Activated CD8-positive, alpha-beta memory T cell treated with anti-CD3 and anti-CD28 coated beads, Interleukin-2, amount 10 ng/mL, durations not matched to agents 7 days and 5 days (primary cell): ENCODE measurements at regions of chr5 and their contacts with region 1.

Region 1: GRCh38 chr5:71475788-71476384 is 20.4 kb downstream of the BDP1 start:
- DNase-seq: no peak
- ATAC-seq: peak; percentile 76
- H3K4me3 Mint-ChIP-seq: no peak overlapping the region
- H3K27ac Mint-ChIP-seq: no peak overlapping the region
- H3K4me1 Mint-ChIP-seq: peaks cover 4% of the 10 kb centered on the region
- H3K27me3 Mint-ChIP-seq: no peaks in the 10 kb centered on the region

Region 2: DNA sequence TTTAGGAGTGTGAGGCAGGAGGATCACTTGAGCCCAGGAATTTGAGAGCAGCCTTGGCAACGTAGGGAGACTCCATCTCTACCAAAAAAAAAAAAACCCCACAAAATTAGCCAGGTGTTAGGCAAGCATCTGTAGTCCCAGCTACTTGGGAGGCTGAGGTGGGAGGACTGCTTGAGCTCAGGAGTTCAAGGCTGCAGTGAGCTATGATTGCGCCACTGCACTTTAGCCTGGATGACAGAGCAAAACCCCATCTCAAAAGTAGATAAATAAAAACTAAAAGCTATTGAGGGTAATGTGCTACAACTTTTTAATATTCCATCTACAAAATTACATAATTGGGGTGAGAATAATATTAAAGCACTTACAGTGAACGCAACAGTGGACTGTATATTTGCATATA is 14.5 kb before region 1 on chr5:
- CTCF ChIA-PET with region 1: interaction called, 11 read pairs
- DNase-seq: no peak
- ATAC-seq: no peak
- H3K4me3 Mint-ChIP-seq: no peak overlapping the region
- H3K27ac Mint-ChIP-seq: no peak overlapping the region
- H3K4me1 Mint-ChIP-seq: peaks cover 20% of the 10 kb centered on the region
- H3K27me3 Mint-ChIP-seq: no peaks in the 10 kb centered on the region

Region 3: GRCh38 chr5:71492817-71493615 is 17.1 kb after region 1 on chr5:
- CTCF ChIA-PET with region 1: interaction called, 17 read pairs
- DNase-seq: no peak
- ATAC-seq: no peak
- H3K4me3 Mint-ChIP-seq: no peak overlapping the region
- H3K27ac Mint-ChIP-seq: no peak overlapping the region
- H3K4me1 Mint-ChIP-seq: no peaks in the 10 kb centered on the region
- H3K27me3 Mint-ChIP-seq: no peaks in the 10 kb centered on the region

Region 4: GRCh38 chr5:71601222-71602041 is 125.5 kb after region 1 on chr5:
- CTCF ChIA-PET with region 1: interaction called, 13 read pairs
- DNase-seq: peak; percentile 93
- ATAC-seq: peak; percentile 92
- H3K4me3 Mint-ChIP-seq: peak overlapping the region; percentile 42
- H3K27ac Mint-ChIP-seq: peak overlapping the region; percentile 99
- H3K4me1 Mint-ChIP-seq: peaks cover 42% of the 10 kb centered on the region
- H3K27me3 Mint-ChIP-seq: no peaks in the 10 kb centered on the region